Adrenal gland (tissue), 19 donors: ENCODE measurements at regions of chr18 and their contacts with region 1.

Region 1: GRCh38 chr18:24878289-24878688 is 417.9 kb downstream of the HRH4 start:
- DNase-seq: peak in 5 of 7 donors; percentile 16 to 47 (median 25)
- H3K4me3 ChIP-seq: no peak overlapping the region
- H3K27ac ChIP-seq: no peak overlapping the region
- H3K4me1 ChIP-seq: no peaks in the 10 kb centered on the region
- H3K27me3 ChIP-seq: no peaks in the 10 kb centered on the region
- CTCF ChIP-seq: peak; percentile 17 to 75 (median 60)
- POLR2A ChIP-seq: no peak

Region 2: GRCh38 chr18:25669741-25670140 is 791.5 kb after region 1 on chr18:
- intact Hi-C with region 1: loop called in 1 of 2 experiments (anchors 10 kb)
- DNase-seq: peak in 5 of 7 donors; percentile 13 to 58 (median 26)
- H3K4me3 ChIP-seq: no peak overlapping the region
- H3K27ac ChIP-seq: no peak overlapping the region
- H3K4me1 ChIP-seq: no peaks in the 10 kb centered on the region
- H3K27me3 ChIP-seq: no peaks in the 10 kb centered on the region
- CTCF ChIP-seq: peak in 5 of 6 experiments; percentile 17 to 55 (median 32)
- POLR2A ChIP-seq: no peak

Region 3: DNA sequence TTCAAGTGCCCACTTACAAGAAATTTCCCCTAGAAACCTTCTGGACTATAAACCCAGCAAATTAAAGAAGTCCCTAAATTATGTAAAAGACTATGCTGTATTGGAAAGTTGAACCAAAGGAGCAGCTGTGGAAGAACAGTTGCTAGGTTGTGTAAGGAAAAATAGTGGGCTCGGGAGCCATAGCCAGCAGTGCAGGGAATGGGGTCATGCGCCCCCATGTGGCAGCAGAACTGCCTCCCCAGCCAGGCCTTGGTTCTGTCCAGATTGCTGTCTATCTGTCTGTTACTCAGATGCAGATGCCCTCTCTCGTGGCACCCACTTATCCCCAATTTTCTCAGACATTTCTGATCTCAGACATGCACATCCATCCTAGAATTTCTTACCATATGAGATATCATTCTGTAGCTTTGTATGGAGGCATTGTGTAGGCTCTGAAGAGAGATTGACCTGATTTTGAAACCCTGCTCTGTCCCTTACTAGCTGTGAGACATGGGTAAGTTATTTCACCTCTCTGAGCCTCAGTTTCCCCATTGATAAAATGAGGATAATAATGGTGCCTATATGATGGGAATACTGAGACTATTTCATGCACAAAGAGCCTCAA is 953.8 kb after region 1 on chr18:
- intact Hi-C with region 1: loop called in 1 of 2 experiments (anchors 5 kb)
- DNase-seq: peak; percentile 62 to 86 (median 78)
- H3K4me3 ChIP-seq: no peak overlapping the region
- H3K27ac ChIP-seq: peak overlapping the region in 2 of 5 donors; percentile 38 to 49
- H3K4me1 ChIP-seq: peaks cover 11 to 13% of the 10 kb centered on the region in 2 donors
- H3K27me3 ChIP-seq: no peaks in the 10 kb centered on the region
- CTCF ChIP-seq: peak; percentile 68 to 78 (median 72)
- POLR2A ChIP-seq: no peak

Region 4: DNA sequence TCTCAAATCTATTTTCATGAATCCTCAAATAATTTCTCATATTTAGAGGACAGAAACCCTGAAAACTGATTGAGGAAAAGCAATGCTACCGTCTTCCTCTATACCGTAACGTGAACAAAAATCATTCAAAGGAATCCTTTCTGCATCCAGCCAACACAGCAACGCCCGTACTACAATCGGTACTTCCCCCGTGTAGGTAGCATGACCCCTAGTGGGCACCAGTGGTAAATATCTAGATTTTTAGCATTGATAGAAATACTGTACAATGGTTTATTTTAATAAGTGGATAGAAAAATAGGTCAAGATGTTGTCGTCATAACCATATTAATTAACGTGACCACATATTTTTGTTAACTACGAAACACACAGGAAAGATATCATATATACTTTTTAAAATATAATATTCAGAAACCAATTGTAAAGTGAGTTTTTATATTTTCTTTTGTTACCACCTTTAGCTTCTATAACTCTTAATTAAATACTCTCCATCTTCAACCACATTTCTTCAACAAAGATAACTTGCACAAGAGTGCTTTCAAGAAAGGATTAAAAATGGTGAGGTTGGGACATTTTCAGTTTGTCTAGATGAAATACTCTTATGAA is 1018.0 kb after region 1 on chr18:
- intact Hi-C with region 1: loop called in 1 of 2 experiments (anchors 5 kb)
- DNase-seq: peak; percentile 31 to 56 (median 50)
- H3K4me3 ChIP-seq: no peak overlapping the region
- H3K27ac ChIP-seq: no peak overlapping the region
- H3K4me1 ChIP-seq: no peaks in the 10 kb centered on the region
- H3K27me3 ChIP-seq: no peaks in the 10 kb centered on the region
- CTCF ChIP-seq: peak; percentile 70 to 84 (median 80)
- POLR2A ChIP-seq: no peak